ENCODE measurements at regions of chr4 and their contacts with region 1.

Region 1: DNA sequence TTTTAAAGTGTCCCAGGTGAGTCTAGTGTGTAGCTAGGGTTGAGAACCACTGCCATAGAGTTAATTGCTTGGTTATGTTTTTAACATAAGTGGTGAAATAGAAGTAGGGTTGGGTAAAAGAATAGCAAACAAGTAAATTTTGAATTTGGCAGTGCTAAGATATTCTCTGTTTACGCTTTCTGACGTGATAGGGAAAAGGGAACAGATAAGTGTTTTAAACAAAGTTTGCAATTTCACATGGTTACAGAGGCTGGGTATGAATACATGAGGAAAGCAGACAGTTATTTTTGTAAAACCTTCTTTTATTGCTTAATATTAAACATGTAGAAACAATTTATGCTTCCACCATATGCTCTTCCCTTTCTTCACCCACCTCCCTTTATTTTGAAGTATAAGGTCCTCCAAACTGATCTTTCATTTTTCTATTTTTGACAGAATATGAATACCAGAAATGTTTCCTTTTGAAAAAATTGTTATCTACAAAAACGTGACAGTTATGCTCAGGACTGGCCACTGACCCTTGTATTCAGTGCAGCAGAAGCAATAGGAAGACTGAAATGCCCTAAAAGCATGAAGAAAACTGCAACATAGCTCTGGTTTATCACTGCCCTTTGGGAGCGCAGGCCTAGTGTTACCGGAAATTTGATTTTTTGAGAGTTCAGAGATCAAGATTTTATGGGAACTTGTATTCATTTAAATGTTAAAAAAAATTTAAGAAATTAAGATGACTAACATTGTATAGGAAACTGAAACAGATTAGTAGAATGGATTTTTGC is 214.4 kb upstream of the ARSJ start:
- DNase-seq: no peak
- H3K4me3 ChIP-seq: no peak overlapping the region
- CTCF ChIP-seq: no peak

Region 2: GRCh38 chr4:114180481-114180880 is 13.3 kb before region 1 on chr4:
- CTCF ChIA-PET with region 1: interaction called, 10 read pairs
- POLR2A ChIA-PET with region 1: no interaction called
- DNase-seq: peak; percentile 51
- H3K4me3 ChIP-seq: no peak overlapping the region
- CTCF ChIP-seq: peak; percentile 81

Region 3: DNA sequence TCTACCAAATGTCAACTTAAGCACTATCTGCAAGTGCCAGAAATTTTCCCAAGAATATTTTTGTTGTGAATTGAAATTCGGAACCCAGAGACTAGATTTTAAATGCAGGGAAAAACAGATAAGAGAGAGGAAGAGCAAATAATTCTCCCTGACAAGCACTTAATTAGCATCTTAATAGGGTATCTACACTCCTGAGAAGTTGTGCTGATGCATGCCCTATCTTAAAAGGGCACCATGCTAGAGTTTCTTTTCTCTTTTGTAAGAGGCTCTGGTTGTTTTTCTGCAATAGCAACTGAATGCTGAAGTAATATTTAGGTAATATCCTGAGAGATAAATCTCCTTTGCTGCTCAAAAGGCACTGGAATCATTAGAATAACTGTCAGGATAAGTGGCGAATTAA is 264.9 kb after region 1 on chr4:
- CTCF ChIA-PET with region 1: no interaction called
- POLR2A ChIA-PET with region 1: no interaction called
- DNase-seq: no peak
- H3K4me3 ChIP-seq: no peak overlapping the region
- CTCF ChIP-seq: no peak